IMR-90 (cell line): ENCODE measurements at regions of chr9 and their contacts with region 1.

Region 1: GRCh38 chr9:33290247-33291030 is at the start of gene NFX1:
- DNase-seq: peak; percentile 99
- ATAC-seq: peak; percentile 91
- H3K4me3 ChIP-seq: peak within 1 kb of the TSS; percentile 68
- H3K27ac ChIP-seq: peak within 1 kb of the TSS; percentile 99
- H3K4me1 ChIP-seq: peaks cover 4% of the 10 kb centered on the region; the same call in 1 of the 2 replicates
- H3K27me3 ChIP-seq: no peaks in the 10 kb centered on the region
- CTCF ChIP-seq: no peak
- POLR2A ChIP-seq: peak; percentile 98
- RAD21 ChIP-seq: no peak
- total RNA-seq, gene NFX1: 36.0 and 36.9 TPM in 2 replicates

Region 2: DNA sequence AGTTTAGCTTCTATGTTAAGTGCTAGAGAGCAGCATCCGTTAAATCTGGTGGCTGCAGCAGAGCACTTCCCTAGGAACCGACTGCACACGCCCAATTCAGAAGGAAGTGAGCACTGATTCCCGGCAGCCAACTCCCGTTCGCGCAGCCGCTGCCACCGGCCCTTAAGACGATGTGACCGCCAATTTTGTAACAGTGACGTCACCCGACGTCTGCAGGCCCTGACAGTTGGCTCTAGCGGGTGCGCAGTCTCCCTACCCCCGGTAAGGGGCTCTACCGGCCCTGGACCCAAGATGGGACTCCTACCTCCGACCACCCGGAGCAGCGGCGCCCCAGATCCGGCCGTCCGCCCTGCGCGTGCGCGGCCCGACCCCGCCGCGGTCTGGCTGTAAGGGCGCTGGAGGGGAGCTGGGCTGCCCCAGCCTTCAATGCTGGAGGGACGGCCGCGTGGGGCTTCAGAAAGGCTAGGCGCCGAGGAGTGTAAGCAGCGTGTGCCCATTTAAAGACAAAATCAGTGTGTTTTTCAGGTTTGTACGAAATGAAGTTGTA is 246.2 kb before region 1 on chr9:
- CTCF ChIA-PET with region 1: no interaction called
- POLR2A ChIA-PET with region 1: interaction called, 12 read pairs
- dilution Hi-C with region 1: no loop called
- in situ Hi-C with region 1: no loop called
- intact Hi-C with region 1: no loop called
- DNase-seq: peak; percentile 93
- ATAC-seq: peak; percentile 92
- H3K4me3 ChIP-seq: peak overlapping the region; percentile 89
- H3K27ac ChIP-seq: peak overlapping the region; percentile 85
- H3K4me1 ChIP-seq: no peaks in the 10 kb centered on the region
- H3K27me3 ChIP-seq: no peaks in the 10 kb centered on the region
- CTCF ChIP-seq: no peak
- POLR2A ChIP-seq: peak; percentile 38; the same call in 1 of the 2 replicates
- RAD21 ChIP-seq: no peak

Region 3: DNA sequence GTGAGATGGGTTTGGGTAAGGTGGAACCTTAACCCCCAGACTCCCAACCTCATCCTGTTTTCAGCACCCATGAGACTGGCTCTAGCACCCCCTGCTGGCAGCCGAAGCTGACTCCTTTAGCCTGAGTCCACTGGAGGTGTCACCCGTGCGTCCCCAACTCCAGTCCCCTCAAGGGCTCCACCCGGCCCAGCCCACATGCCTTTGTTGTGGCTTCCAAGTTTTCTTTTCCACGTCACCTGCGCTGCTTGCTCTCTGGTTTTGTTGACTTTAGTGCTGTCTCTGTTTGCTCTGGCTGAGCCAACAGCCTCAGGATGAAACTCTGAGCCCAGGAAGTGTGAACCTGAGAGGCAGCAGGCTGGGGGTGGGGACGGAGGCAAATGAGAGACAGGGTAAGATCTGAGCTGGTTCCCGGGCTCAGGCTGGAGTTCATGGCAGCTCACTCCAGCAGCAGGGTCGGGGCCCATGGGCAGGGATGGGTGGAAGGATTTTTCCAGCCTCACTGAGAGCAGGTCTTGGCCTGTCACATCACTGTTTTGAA is 125.1 kb after region 1 on chr9:
- CTCF ChIA-PET with region 1: interaction called, 3 read pairs
- POLR2A ChIA-PET with region 1: no interaction called
- dilution Hi-C with region 1: no loop called
- in situ Hi-C with region 1: no loop called
- intact Hi-C with region 1: loop called (anchors 1 kb)
- DNase-seq: peak; percentile 22
- ATAC-seq: peak; percentile 91
- H3K4me3 ChIP-seq: no peak overlapping the region
- H3K27ac ChIP-seq: no peak overlapping the region
- H3K4me1 ChIP-seq: no peaks in the 10 kb centered on the region
- H3K27me3 ChIP-seq: peaks cover 16% of the 10 kb centered on the region
- CTCF ChIP-seq: peak; percentile 67
- POLR2A ChIP-seq: no peak
- RAD21 ChIP-seq: peak; percentile 58

Region 4: GRCh38 chr9:33466565-33467495 is 176.4 kb after region 1 on chr9:
- CTCF ChIA-PET with region 1: interaction called, 5 read pairs
- POLR2A ChIA-PET with region 1: no interaction called
- dilution Hi-C with region 1: loop called (anchors 25 kb)
- in situ Hi-C with region 1: loop called (anchors 5 kb)
- intact Hi-C with region 1: loop called (anchors 1 kb)
- DNase-seq: peak; percentile 24
- ATAC-seq: peak; percentile 91
- H3K4me3 ChIP-seq: no peak overlapping the region
- H3K27ac ChIP-seq: no peak overlapping the region
- H3K4me1 ChIP-seq: no peaks in the 10 kb centered on the region
- H3K27me3 ChIP-seq: no peaks in the 10 kb centered on the region
- CTCF ChIP-seq: peak; percentile 84
- POLR2A ChIP-seq: no peak
- RAD21 ChIP-seq: peak; percentile 84

Region 5: GRCh38 chr9:33517373-33517772 is 226.9 kb after region 1 on chr9:
- CTCF ChIA-PET with region 1: no interaction called
- POLR2A ChIA-PET with region 1: no interaction called
- dilution Hi-C with region 1: no loop called
- in situ Hi-C with region 1: no loop called
- intact Hi-C with region 1: loop called (anchors 5 kb)
- DNase-seq: peak; percentile 60
- ATAC-seq: peak; percentile 71
- H3K4me3 ChIP-seq: no peak overlapping the region
- H3K27ac ChIP-seq: no peak overlapping the region
- H3K4me1 ChIP-seq: no peaks in the 10 kb centered on the region; the same call in 1 of the 2 replicates
- H3K27me3 ChIP-seq: no peaks in the 10 kb centered on the region
- CTCF ChIP-seq: peak; percentile 67
- POLR2A ChIP-seq: no peak
- RAD21 ChIP-seq: peak; percentile 53

Region 6: DNA sequence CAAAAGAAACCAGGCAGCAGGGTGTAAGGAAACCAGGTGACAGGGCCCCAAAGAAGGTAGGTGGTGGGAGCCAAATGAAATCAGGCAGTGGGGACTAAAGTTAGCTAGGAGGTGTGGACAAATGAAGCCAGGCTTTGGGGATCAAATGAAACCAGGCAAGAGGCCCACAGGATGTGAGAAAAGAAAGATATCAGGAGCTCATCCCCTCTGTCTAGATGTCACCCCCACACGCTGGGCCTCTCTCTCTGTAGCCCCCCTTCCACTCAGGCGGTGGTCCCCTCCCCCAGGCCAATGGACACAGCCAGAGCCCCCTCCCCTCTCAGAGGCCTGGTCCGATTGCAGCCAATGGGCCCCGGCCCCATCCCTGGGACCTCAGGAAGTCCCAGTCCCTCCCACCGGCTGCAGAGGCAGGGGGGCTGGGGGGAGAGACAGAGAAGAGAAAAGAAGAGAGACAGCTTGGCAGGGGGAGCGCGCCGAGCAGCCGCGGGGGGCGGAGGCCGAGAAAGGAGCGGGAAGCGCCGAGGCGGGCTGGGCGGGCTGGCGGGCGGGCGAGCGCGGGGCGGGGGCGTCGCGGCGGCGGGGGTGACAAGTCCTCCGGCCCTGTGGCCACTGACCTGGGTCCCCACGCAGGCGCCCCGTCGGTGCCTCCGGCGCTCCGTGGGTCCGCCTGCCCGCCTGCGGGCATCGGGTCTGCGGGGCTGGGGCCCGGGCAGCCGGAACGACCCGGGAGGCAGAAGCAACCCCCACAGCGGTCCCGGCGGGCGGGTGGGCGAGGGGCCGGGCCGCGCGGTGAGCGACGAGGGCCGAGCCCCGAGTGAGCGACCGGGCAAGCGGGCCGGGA is 1287.2 kb after region 1 on chr9:
- CTCF ChIA-PET with region 1: no interaction called
- POLR2A ChIA-PET with region 1: no interaction called
- dilution Hi-C with region 1: no loop called
- in situ Hi-C with region 1: no loop called
- intact Hi-C with region 1: no loop called
- DNase-seq: no peak
- ATAC-seq: no peak
- H3K4me3 ChIP-seq: no peak overlapping the region
- H3K27ac ChIP-seq: no peak overlapping the region
- H3K4me1 ChIP-seq: no peaks in the 10 kb centered on the region
- H3K27me3 ChIP-seq: peaks cover 90% of the 10 kb centered on the region
- CTCF ChIP-seq: no peak
- POLR2A ChIP-seq: no peak
- RAD21 ChIP-seq: no peak